Activated T-helper 1 cell treated with anti-CD3 and anti-CD28 coated beads, Interleukin-12 subunit alpha, Interleukin-12 subunit beta, Interleukin-2, Interleukin-4 antibody, amounts not matched to agents 30 ng/mL and 10 ng/mL and 1 ng/mL, durations not matched to agents 14 hours and 24 hours and 36 hours (primary cell): ENCODE measurements at regions of chr1 and their contacts with region 1.

Region 1: DNA sequence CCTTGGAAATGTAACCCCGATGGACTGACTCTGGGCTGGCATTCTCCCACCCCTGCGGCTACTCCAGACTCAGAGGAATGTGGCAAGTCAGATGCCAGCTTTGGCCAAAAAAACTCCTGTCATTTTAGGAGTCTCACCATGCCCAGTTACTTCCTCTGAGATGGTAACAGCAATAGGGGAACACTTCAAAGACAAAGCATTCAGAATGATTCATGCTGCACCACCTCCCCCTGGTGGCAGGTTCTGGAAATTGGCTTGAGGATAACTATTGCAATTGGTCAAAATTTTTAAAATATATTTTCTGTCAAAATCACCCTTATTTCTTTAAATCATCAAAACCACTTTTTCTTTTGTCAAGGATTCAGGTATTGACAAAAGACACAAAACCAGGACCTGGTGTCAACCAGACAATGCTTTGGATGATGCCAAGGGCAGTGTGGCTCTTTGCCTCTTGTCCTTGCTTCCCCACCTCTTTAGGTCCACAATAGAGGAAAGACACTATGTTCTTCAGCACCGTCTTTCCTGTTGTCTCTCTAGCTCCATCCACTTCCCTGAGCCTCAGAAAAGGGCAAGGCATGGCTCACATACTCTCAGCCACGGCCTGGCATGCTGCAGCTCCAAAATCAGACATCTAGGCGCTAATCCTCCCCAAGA is 9.9 kb upstream of the CDCA8 start:
- DNase-seq: peak; percentile 61
- H3K4me3 Mint-ChIP-seq: no peak overlapping the region
- H3K27ac Mint-ChIP-seq: no peak overlapping the region
- H3K4me1 Mint-ChIP-seq: no peaks in the 10 kb centered on the region
- H3K27me3 Mint-ChIP-seq: no peaks in the 10 kb centered on the region

Region 2: GRCh38 chr1:37449936-37450335 is 232.5 kb before region 1 on chr1:
- intact Hi-C with region 1: loop called (anchors 1 kb)
- DNase-seq: no peak
- H3K4me3 Mint-ChIP-seq: no peak overlapping the region
- H3K27ac Mint-ChIP-seq: no peak overlapping the region
- H3K4me1 Mint-ChIP-seq: peaks cover 5% of the 10 kb centered on the region
- H3K27me3 Mint-ChIP-seq: peaks cover 9% of the 10 kb centered on the region

Region 3: GRCh38 chr1:37486680-37487618 is 195.5 kb before region 1 on chr1:
- intact Hi-C with region 1: no loop called
- DNase-seq: peak; percentile 63
- H3K4me3 Mint-ChIP-seq: no peak overlapping the region
- H3K27ac Mint-ChIP-seq: peak overlapping the region; percentile 68
- H3K4me1 Mint-ChIP-seq: peaks cover 14% of the 10 kb centered on the region
- H3K27me3 Mint-ChIP-seq: no peaks in the 10 kb centered on the region

Region 4: DNA sequence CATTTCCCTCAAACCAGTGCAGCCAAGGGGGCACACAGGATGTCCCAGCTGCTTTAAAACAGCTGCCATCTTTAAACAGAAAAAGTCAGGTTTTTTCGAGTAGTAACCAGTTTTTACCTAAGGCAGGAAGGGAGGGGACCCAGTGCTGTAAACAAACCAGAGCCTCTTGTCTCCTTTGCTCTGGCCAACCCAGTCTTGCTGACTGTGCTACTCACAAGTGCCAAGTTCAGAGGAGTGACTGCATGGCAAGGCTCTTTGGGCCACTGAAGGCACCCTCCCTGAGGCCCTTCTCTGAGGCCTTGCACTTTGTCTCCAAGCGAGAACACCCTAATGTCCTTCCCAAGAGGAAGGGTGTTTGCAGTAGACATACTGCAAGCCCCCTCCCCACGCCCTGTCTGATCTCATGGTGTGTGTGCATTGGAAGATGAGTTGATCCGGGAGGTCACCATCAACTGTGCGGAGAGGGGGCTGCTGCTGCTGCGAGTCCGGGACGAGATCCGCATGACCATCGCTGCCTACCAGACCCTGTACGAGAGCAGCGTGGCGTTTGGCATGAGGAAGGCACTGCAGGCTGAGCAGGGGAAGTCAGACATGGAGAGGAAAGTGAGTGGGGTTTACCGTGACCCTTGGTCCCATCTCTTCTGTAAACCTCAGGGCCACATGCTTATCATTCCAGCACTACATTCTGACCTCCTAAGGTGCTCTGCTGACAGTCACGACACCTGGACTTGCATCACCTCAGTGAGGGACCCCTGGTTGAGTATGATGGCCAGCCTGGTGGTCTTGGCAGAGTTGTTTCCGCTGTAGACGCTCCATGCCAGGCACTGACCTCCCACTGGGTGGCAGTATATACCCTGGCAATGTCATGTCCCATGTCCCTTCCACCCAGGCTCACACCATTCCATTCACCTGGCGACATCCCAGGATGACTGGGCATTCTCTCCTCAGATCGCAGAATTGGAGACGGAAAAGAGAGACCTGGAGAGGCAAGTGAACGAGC is 121.0 kb before region 1 on chr1:
- intact Hi-C with region 1: loop called (anchors 1 kb)
- DNase-seq: no peak
- H3K4me3 Mint-ChIP-seq: no peak overlapping the region
- H3K27ac Mint-ChIP-seq: no peak overlapping the region
- H3K4me1 Mint-ChIP-seq: peaks cover 18% of the 10 kb centered on the region
- H3K27me3 Mint-ChIP-seq: no peaks in the 10 kb centered on the region

Region 5: DNA sequence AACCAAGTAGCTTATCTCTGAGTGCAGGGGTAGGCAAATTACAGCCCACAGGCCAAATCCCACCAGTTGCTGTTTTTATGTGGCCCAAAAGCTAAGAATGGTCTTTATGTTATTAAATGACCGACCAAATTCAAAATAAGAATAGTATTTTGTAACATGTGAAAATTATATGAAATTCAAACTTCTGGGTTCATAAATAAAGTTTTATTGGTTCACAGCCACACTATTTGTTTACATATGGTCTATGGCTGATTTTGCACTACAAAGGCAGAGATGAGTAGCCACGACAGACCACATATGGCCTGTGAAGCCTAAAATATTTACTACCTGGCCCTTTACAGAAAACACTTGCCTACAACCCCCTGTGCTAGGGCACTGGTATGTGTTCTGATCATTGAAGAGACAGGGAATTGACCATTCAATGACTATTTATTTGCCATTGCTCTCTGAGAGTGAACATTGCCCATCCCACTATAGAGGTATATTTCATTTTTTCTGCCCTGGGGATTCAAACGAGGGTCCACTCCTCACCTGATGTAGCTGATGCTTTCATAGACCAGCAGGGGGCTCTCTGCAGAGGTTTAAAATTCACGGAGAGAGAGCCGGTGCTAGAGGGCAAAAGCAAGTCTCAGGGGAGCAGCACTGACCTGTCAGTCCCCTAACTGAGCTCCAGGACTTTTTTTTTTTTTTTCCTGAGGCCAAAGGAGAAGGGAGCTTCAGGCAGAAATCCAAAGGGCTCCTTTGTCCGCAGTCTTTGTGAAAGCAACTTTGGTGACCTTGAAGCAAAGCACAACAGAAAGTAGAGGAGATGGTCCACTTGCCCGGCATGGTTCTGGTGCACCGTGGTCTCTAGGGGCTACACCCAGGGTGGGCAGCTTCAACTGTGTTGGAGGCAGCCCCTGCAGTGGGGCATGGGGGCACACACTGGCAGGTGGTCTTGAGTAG is 79.4 kb before region 1 on chr1:
- intact Hi-C with region 1: loop called (anchors 1 kb)
- DNase-seq: peak; percentile 5
- H3K4me3 Mint-ChIP-seq: no peak overlapping the region
- H3K27ac Mint-ChIP-seq: no peak overlapping the region
- H3K4me1 Mint-ChIP-seq: no peaks in the 10 kb centered on the region
- H3K27me3 Mint-ChIP-seq: peaks cover 19% of the 10 kb centered on the region